ENCODE measurements at regions of chr12 and their contacts with region 1.

Region 1: DNA sequence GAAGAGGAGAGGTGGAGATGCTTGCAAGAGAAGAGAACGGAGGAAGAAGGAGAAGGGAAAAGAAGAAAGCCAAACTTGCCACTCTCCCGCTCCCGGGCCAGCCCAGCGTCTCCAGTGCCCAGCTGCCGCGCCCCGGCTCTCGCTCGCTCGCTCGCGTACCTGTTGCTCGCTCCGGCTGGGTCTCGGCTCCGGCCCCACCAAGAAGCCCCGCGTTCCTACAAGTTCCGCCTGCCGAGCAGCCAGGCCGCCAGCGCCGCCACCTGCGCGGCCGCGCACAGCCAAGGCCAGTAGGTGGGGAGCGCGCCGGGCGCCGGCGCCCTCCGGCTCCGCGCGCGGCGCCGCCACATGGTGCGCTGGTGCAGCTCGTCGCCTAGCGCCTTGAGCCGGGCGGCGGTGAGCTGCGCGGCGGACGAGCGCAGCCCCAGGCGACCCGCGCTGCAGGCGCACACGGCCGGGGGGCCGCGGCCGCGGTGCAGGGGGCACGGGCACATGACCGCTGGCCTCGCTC is 370 bp downstream of the HRK start:
- DNase-seq: no peak
- ATAC-seq: no peak
- H3K4me3 ChIP-seq: peak overlapping the region; percentile 32 to 58
- H3K27ac ChIP-seq: no peak overlapping the region
- H3K4me1 ChIP-seq: peaks cover 0 to 2% of the 10 kb centered on the region in 2 donors
- H3K27me3 ChIP-seq: no peaks in the 10 kb centered on the region

Region 2: GRCh38 chr12:116369921-116370404 is 510.9 kb before region 1 on chr12:
- intact Hi-C with region 1: no loop called
- DNase-seq: no peak
- ATAC-seq: peak; percentile 58
- H3K4me3 ChIP-seq: no peak overlapping the region
- H3K27ac ChIP-seq: peak overlapping the region in 1 of 2 donors; percentile 10
- H3K4me1 ChIP-seq: peaks cover 0 to 2% of the 10 kb centered on the region in 2 donors
- H3K27me3 ChIP-seq: no peaks in the 10 kb centered on the region

Region 3: GRCh38 chr12:116703214-116703795 is 177.6 kb before region 1 on chr12:
- intact Hi-C with region 1: loop called (anchors 1 to 5 kb)
- DNase-seq: peak; percentile 70 to 84
- ATAC-seq: no peak
- H3K4me3 ChIP-seq: no peak overlapping the region
- H3K27ac ChIP-seq: no peak overlapping the region
- H3K4me1 ChIP-seq: no peaks in the 10 kb centered on the region
- H3K27me3 ChIP-seq: no peaks in the 10 kb centered on the region

Region 4: DNA sequence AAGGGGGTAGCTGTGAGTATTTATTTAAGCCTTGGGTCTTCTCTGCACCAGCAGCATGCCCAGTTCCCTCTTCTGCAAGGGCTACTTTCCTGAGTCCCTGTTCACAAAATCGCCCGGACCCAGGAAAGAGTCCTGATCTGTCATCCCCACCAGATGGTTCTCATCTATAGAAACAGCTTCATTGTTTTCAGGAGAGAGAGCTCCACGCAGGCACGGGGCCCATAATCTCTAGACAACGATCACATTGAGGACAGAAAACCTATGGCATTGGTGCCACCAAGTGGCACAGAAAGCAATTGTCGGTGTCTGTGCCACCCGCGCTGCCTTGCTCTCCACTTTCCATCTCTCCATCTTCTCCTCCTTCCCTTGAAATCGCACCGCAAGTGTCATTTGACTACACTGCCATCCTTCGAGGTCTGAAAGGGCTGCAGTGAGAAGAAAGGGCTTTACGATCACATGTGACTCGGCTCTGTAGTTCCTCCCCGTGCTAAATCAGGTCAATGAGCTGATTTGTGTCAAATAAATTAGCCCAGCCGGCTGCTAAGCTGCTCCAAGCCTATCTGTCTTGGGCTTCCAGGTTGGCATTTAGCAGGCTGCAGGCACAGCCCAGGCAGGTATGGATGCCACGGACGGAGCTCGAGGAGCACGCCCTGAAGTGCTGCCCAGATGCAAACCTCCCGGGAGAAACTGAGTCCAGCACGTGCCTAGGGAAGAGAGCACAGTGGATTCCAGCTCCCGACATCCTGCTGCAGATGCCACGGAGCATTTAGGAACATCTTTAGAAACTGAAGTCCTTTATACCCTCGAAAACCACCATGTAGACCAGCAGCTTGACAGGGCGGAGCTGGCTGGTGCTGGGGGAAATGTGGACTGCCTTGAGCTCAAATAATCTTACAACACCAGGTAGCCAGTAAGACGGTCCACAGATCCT is 171.8 kb before region 1 on chr12:
- intact Hi-C with region 1: loop called in 1 of 2 experiments (anchors 5 kb)
- DNase-seq: peak in 1 of 2 donors; percentile 67
- ATAC-seq: peak; percentile 81
- H3K4me3 ChIP-seq: no peak overlapping the region
- H3K27ac ChIP-seq: no peak overlapping the region
- H3K4me1 ChIP-seq: no peaks in the 10 kb centered on the region
- H3K27me3 ChIP-seq: no peaks in the 10 kb centered on the region

Region 5: GRCh38 chr12:116773276-116773731 is 107.6 kb before region 1 on chr12:
- intact Hi-C with region 1: loop called in 1 of 2 experiments (anchors 10 kb)
- DNase-seq: peak in 1 of 2 donors; percentile 33
- ATAC-seq: no peak
- H3K4me3 ChIP-seq: no peak overlapping the region
- H3K27ac ChIP-seq: no peak overlapping the region
- H3K4me1 ChIP-seq: no peaks in the 10 kb centered on the region
- H3K27me3 ChIP-seq: no peaks in the 10 kb centered on the region